ENCODE measurements at regions of chr1 and their contacts with region 1.

Region 1: GRCh38 chr1:182595641-182596240 is 6.7 kb upstream of the RNASEL start:
- ATAC-seq: peak; percentile 10 to 73 (median 58)
- H3K4me3 ChIP-seq: no peak overlapping the region
- H3K27ac ChIP-seq: no peak overlapping the region
- H3K4me1 ChIP-seq: peaks cover under 1% of the 10 kb centered on the region in 2 donors

Region 2: GRCh38 chr1:182781841-182782586 is 186.3 kb after region 1 on chr1:
- in situ Hi-C with region 1: loop called (anchors 5 to 10 kb)
- ATAC-seq: peak; percentile 62 to 85 (median 73)
- H3K4me3 ChIP-seq: no peak overlapping the region
- H3K27ac ChIP-seq: no peak overlapping the region
- H3K4me1 ChIP-seq: peaks cover 0 to 3% of the 10 kb centered on the region in 2 donors